Activated CD8-positive, alpha-beta memory T cell treated with anti-CD3 and anti-CD28 coated beads, Interleukin-2, amount 10 ng/mL, durations not matched to agents 7 days and 5 days (primary cell): ENCODE measurements at regions of chr12 and their contacts with region 1.

Region 1: GRCh38 chr12:4276524-4277204 is 3.1 kb downstream of the CCND2 start:
- DNase-seq: peak; percentile 93
- ATAC-seq: peak; percentile 16
- H3K4me3 Mint-ChIP-seq: peak overlapping the region; percentile 88
- H3K27ac Mint-ChIP-seq: peak overlapping the region; percentile 100
- H3K4me1 Mint-ChIP-seq: peaks cover 57% of the 10 kb centered on the region
- H3K27me3 Mint-ChIP-seq: no peaks in the 10 kb centered on the region

Region 2: DNA sequence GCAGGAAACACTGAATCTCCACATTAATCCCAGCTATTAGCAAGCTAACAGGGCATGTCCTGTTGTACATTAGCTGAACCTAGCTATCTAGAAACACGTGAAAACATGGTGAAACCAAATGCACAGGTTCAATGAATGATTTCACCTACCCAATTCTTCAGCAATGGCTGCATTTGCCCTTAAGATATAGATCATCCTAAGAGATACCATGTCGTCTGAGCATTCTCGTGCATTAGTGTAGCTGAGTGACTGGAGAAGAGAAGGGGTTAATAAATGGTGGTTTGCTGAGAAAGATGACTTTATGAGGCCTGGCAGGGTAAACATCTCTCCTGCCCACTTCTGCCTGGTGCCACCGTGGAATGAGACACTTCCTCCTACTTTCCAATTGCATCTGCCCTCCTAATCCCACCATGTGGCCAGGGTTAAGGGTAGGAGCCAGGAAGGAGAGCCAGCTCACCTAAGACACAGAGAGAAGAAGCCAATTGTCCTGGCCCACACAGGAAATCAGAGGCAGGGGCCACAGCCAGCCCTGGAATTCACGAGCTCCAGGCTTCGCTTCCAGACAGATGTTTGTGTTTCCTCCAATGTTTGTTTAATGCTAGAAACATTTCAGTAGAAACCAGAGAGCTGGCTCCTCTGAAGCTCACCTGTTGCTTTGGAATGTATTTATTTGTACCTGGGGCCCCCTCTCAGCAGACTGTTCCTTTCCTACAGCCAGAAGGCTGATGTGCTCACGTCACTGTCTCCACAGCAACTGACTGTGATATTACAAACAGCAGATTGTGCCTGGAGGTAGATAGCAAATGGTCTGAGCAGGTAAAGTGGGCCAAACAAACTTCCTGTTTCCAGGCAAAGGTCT is 277.5 kb before region 1 on chr12:
- CTCF ChIA-PET with region 1: interaction called, 30 read pairs
- DNase-seq: no peak
- ATAC-seq: no peak
- H3K4me3 Mint-ChIP-seq: no peak overlapping the region
- H3K27ac Mint-ChIP-seq: no peak overlapping the region
- H3K4me1 Mint-ChIP-seq: peaks cover 18% of the 10 kb centered on the region
- H3K27me3 Mint-ChIP-seq: peaks cover 3% of the 10 kb centered on the region

Region 3: GRCh38 chr12:4089121-4089606 is 187.5 kb before region 1 on chr12:
- CTCF ChIA-PET with region 1: interaction called, 13 read pairs
- DNase-seq: no peak
- ATAC-seq: no peak
- H3K4me3 Mint-ChIP-seq: no peak overlapping the region
- H3K27ac Mint-ChIP-seq: no peak overlapping the region
- H3K4me1 Mint-ChIP-seq: peaks cover 4% of the 10 kb centered on the region
- H3K27me3 Mint-ChIP-seq: peaks cover 14% of the 10 kb centered on the region

Region 4: GRCh38 chr12:4148418-4149056 is 128.1 kb before region 1 on chr12:
- CTCF ChIA-PET with region 1: interaction called, 97 read pairs
- DNase-seq: peak; percentile 58
- ATAC-seq: no peak
- H3K4me3 Mint-ChIP-seq: no peak overlapping the region
- H3K27ac Mint-ChIP-seq: peak overlapping the region; percentile 81
- H3K4me1 Mint-ChIP-seq: peaks cover 90% of the 10 kb centered on the region
- H3K27me3 Mint-ChIP-seq: no peaks in the 10 kb centered on the region

Region 5: DNA sequence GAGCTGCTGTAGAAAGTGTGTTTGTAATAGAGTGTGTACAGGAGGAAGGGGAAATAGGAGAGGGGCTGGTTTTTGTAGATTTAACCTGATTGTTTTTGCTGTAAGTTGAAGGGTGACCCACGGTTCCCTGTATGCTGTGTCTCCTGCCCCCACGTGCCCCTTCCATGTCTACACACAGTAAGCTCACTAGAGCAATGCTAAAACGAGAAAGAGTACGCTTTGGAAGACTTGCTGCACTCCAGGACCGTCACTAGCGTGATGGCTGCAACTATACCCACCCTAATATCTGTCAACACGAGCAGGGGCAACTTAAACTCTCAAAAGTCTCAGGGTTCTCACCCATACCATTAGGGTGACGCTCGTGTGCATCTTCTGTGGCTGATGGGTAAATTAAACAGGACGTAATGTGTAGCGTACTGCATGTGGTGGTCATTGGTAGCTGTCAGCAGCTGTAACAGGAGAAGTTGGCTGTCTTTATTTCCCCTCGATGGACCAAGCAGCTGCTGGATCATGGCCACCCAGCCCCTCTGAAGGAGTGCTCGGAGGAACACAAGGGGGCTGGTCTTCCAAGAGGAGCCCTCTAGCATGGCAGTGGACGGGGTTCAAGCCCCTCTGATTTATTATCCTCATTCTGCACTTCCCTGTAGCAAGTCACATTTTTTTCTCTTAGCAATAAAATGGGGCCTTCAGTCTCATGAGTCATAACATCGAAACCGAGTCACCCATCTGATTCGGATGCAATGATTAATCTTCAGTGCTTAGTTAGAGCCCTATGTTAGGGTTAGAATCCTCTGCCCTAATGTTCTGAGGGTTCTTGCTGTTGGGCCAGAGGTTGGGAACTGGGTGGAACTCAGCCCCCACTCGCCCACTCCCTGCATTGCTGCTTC is 10.9 kb after region 1 on chr12:
- CTCF ChIA-PET with region 1: interaction called, 38 read pairs
- DNase-seq: no peak
- ATAC-seq: peak; percentile 37
- H3K4me3 Mint-ChIP-seq: no peak overlapping the region
- H3K27ac Mint-ChIP-seq: peak overlapping the region; percentile 25
- H3K4me1 Mint-ChIP-seq: peaks cover 94% of the 10 kb centered on the region
- H3K27me3 Mint-ChIP-seq: no peaks in the 10 kb centered on the region